ENCODE measurements at regions of chr1 and their contacts with region 1.

Region 1: DNA sequence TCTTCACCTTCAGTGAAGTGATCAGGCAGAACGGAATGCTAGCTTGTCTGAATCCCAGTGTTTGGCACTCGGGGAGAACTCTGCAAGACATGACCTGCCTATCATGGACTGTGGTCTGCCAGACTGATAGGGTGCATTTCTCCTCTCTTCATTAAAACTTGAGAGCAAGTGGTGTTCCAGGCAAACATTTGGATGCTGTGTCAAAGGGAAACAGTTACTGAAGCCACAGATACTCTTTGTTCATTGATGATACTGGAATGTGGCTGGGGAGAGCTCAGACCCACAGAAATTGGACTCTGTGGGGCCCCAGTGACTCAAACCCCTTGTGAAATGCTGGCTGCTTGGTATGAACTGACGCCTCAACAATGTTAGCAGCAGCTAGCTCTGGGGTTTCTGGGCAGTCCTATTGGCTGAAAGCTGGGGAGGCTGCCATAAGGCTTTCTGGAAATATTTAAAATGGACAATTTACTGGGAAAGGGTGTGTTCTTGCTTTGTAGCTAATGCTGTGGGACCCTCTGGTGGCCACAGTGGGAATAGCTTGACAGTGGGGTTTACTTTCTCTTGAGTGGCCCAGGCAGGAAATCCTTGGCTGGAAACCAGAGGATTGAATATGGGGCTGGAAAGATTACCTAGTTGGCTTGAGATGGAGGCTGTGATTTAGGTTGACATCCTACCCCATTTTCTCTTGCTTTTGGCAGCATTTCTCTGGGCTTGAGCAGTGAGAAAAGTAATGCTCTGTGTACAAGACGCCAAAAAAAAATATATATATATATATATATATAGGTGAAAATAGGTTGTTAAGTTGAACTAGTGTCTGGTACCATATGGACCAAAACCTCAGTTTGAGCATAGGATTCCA is 8.0 kb upstream of the S100A10 start:
- DNase-seq: peak; percentile 89
- H3K4me3 Mint-ChIP-seq: no peak overlapping the region
- H3K27ac Mint-ChIP-seq: no peak overlapping the region
- H3K4me1 Mint-ChIP-seq: peaks cover 1% of the 10 kb centered on the region
- H3K27me3 Mint-ChIP-seq: peaks cover 2% of the 10 kb centered on the region

Region 2: DNA sequence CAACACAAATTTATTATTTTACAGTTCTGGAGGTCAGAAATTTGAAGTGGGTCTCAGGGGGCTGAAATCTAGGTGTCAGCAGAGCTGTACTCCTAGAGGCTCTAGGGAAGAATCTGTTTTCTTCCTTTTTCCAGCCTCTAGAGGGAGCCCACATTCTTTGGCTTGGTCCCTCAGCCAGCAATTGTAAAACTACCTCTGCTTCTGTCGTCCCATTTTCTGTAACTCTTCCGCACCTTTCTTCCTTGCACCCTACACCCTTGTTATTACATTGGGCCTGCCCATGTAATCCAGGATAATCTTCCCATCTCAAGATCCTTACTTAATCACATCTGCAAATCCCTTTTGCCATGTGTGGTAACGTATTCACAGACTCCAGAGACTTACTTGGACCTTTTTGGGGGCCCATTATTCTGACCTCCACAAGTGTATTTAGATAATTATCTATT is 67.5 kb before region 1 on chr1:
- CTCF ChIA-PET with region 1: interaction called, 233 read pairs
- intact Hi-C with region 1: loop called (anchors 1 kb)
- DNase-seq: peak; percentile 64
- H3K4me3 Mint-ChIP-seq: no peak overlapping the region
- H3K27ac Mint-ChIP-seq: no peak overlapping the region
- H3K4me1 Mint-ChIP-seq: no peaks in the 10 kb centered on the region
- H3K27me3 Mint-ChIP-seq: peaks cover 3% of the 10 kb centered on the region

Region 3: GRCh38 chr1:151945725-151946364 is 55.8 kb before region 1 on chr1:
- CTCF ChIA-PET with region 1: interaction called, 12 read pairs
- intact Hi-C with region 1: no loop called
- DNase-seq: peak; percentile 75
- H3K4me3 Mint-ChIP-seq: no peak overlapping the region
- H3K27ac Mint-ChIP-seq: peak overlapping the region; percentile 28
- H3K4me1 Mint-ChIP-seq: peaks cover 33% of the 10 kb centered on the region
- H3K27me3 Mint-ChIP-seq: no peaks in the 10 kb centered on the region

Region 4: GRCh38 chr1:151968058-151968457 is 33.6 kb before region 1 on chr1:
- CTCF ChIA-PET with region 1: interaction called, 206 read pairs
- intact Hi-C with region 1: loop called (anchors 1 kb)
- DNase-seq: peak; percentile 66
- H3K4me3 Mint-ChIP-seq: no peak overlapping the region
- H3K27ac Mint-ChIP-seq: no peak overlapping the region
- H3K4me1 Mint-ChIP-seq: peaks cover 25% of the 10 kb centered on the region
- H3K27me3 Mint-ChIP-seq: peaks cover 2% of the 10 kb centered on the region

Region 5: GRCh38 chr1:151984313-151984956 is 17.2 kb before region 1 on chr1:
- CTCF ChIA-PET with region 1: interaction called, 52 read pairs
- intact Hi-C with region 1: no loop called
- DNase-seq: peak; percentile 68
- H3K4me3 Mint-ChIP-seq: peak overlapping the region; percentile 22
- H3K27ac Mint-ChIP-seq: peak overlapping the region; percentile 84
- H3K4me1 Mint-ChIP-seq: peaks cover 48% of the 10 kb centered on the region
- H3K27me3 Mint-ChIP-seq: no peaks in the 10 kb centered on the region

Region 6: GRCh38 chr1:152034646-152035405 is 33.2 kb after region 1 on chr1:
- CTCF ChIA-PET with region 1: interaction called, 12 read pairs
- intact Hi-C with region 1: no loop called
- DNase-seq: peak; percentile 85
- H3K4me3 Mint-ChIP-seq: peak overlapping the region; percentile 96
- H3K27ac Mint-ChIP-seq: peak overlapping the region; percentile 98
- H3K4me1 Mint-ChIP-seq: peaks cover 21% of the 10 kb centered on the region
- H3K27me3 Mint-ChIP-seq: no peaks in the 10 kb centered on the region

Region 7: GRCh38 chr1:152053375-152053774 is 51.8 kb after region 1 on chr1:
- CTCF ChIA-PET with region 1: no interaction called
- intact Hi-C with region 1: no loop called
- DNase-seq: no peak
- H3K4me3 Mint-ChIP-seq: no peak overlapping the region
- H3K27ac Mint-ChIP-seq: no peak overlapping the region
- H3K4me1 Mint-ChIP-seq: peaks cover 4% of the 10 kb centered on the region
- H3K27me3 Mint-ChIP-seq: peaks cover 10% of the 10 kb centered on the region

Region 8: DNA sequence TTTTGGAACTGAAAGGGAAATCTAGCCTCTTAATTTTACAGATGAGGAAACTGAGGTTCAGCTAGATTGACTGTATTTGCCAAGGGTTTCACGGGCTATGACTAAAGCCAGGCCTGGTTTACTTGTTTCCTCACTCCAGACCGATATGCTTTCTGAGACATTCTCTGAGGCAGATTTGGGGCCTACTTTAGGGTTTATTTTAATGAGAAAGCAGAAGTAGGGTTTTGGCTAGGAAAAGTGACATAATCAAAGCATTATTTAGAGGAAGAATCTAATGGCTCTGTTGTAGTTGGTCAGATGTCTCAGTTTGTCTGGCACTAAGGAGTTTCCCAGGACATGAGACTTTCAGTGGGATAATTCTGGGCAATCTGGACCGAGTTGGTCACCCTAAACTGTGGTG is 159.0 kb after region 1 on chr1:
- CTCF ChIA-PET with region 1: no interaction called
- intact Hi-C with region 1: no loop called
- DNase-seq: no peak
- H3K4me3 Mint-ChIP-seq: no peak overlapping the region
- H3K27ac Mint-ChIP-seq: no peak overlapping the region
- H3K4me1 Mint-ChIP-seq: peaks cover 2% of the 10 kb centered on the region
- H3K27me3 Mint-ChIP-seq: no peaks in the 10 kb centered on the region